ENCODE measurements at regions of chr22 and their contacts with region 1.

Region 1: GRCh38 chr22:43090130-43090789 is 1.1 kb upstream of the TTLL1 start:
- DNase-seq: peak in 1 of 2 donors; percentile 56
- ATAC-seq: peak; percentile 56
- H3K4me3 ChIP-seq: no peak overlapping the region
- H3K27ac ChIP-seq: no peak overlapping the region
- H3K4me1 ChIP-seq: no peaks in the 10 kb centered on the region
- H3K27me3 ChIP-seq: no peaks in the 10 kb centered on the region

Region 2: DNA sequence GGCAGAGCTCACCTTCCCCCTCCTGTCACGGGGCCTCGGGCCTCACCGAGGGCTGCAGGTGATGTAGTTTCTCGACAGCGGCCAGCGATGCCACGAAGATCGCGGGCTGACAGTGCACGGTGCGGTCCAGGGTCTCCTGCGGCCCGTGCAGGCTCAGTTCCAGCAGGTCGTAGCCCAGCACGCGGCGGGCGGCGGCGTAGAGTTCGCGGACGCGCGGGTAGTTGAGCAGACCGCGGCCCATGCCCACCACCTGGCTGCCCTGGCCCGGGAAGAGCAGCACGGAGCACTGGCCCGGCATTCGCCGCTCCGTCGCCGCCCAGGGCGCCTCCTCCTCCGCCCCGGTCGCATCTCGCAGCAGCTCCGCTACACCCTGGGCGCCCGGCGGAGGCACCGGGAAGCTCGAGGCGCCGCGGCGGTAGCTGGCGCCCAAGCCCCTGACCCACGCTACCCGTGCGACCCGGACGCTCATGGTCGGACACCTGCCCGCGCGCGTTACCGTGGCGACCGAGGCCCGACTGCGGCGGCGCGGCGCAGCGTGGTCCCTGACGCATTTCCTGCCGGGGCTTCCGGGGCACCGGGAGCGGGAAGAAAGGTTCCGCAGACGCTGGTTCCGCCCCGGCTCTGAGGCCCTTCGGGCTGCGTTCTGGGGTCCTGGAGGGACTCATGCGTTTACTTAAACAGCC is 52.8 kb after region 1 on chr22 and contains the start of gene MCAT:
- intact Hi-C with region 1: loop called in 1 of 2 experiments (anchors 2 kb)
- DNase-seq: peak; percentile 85 to 95
- ATAC-seq: peak; percentile 91
- H3K4me3 ChIP-seq: peak within 1 kb of the TSS; percentile 52 to 56
- H3K27ac ChIP-seq: peak within 1 kb of the TSS in 1 of 2 donors; percentile 14
- H3K4me1 ChIP-seq: no peaks in the 10 kb centered on the region
- H3K27me3 ChIP-seq: no peaks in the 10 kb centered on the region
- total RNA-seq, gene MCAT: 9.8 to 10.0 TPM

Measured in aorta (tissue), 5 donors.